ENCODE measurements at regions of chr5 and their contacts with region 1.

Region 1: DNA sequence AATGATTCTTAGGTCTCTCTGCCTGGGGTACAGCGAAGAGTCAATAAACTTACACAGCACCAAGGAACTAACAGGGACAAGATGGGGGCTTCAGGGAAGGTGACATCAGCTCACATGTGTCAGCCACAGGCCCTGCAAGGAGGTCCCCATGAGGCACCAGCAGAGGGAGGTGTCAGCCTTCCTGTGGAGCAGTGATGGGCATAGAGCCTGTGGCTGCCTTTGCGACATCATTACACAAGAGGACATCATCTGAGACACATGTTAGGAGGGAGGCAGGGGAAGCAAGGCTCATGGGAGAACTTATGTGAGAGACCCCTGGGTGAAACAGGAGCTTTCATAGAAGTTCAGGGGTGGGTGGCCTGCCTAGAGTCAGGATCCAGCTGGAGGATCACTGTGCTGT is 389.6 kb downstream of the SEMA5A start:
- DNase-seq: peak; percentile 72
- H3K4me3 Mint-ChIP-seq: no peak overlapping the region
- H3K27ac Mint-ChIP-seq: peak overlapping the region; percentile 29
- H3K4me1 Mint-ChIP-seq: peaks cover 6% of the 10 kb centered on the region
- H3K27me3 Mint-ChIP-seq: no peaks in the 10 kb centered on the region
- CTCF ChIP-seq: peak; percentile 49

Region 2: DNA sequence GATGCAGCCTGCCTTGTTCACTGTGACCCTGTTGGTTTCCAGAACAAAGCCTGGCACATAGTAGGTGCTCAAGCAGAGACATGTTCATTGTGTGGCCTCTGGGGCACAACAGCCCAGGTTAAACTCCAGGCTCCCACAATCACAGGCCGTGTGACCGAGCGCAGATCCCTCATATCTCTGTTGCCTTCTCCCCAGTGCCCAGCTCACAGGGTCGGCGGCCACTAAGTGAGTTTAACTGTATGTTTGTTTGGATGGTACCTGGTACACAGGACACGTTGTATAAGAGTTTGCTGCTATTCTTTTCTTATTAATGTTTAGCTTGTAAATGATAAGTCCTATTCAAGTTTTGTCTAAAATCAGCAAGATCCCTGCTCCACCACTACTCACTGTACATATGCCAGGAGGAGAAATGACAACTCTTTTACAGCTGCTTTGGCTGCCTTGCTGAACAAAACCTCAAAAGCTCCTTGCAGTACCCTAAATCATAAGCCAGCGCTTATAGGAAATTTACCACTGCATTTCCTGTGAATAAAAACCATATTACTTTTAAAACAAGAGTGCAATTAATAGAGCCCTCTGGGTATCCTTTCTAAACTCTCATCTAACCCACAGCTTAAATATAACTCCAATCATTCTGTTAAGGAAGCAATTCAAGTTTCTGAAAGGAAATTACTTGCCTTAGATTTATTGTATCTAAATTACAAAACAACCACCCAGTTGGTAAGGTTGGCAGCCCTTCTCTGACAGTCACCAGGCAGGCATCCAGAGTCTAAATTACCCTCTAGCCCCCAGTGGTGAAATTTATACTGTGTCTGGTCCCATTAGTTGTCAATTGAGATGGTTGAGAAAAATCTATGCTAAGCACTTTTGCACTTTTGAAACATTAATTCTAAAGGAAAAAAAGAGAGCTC is 10.2 kb after region 1 on chr5:
- CTCF ChIA-PET with region 1: interaction called, 21 read pairs
- POLR2A ChIA-PET with region 1: interaction called, 4 read pairs
- intact Hi-C with region 1: no loop called
- DNase-seq: peak; percentile 9
- H3K4me3 Mint-ChIP-seq: no peak overlapping the region
- H3K27ac Mint-ChIP-seq: no peak overlapping the region
- H3K4me1 Mint-ChIP-seq: peaks cover 25% of the 10 kb centered on the region
- H3K27me3 Mint-ChIP-seq: no peaks in the 10 kb centered on the region
- CTCF ChIP-seq: no peak

Region 3: GRCh38 chr5:9361835-9362234 is 205.6 kb after region 1 on chr5:
- CTCF ChIA-PET with region 1: no interaction called
- POLR2A ChIA-PET with region 1: no interaction called
- intact Hi-C with region 1: loop called (anchors 10 kb)
- DNase-seq: peak; percentile 85
- H3K4me3 Mint-ChIP-seq: no peak overlapping the region
- H3K27ac Mint-ChIP-seq: no peak overlapping the region
- H3K4me1 Mint-ChIP-seq: no peaks in the 10 kb centered on the region
- H3K27me3 Mint-ChIP-seq: no peaks in the 10 kb centered on the region
- CTCF ChIP-seq: peak; percentile 84

Region 4: GRCh38 chr5:9498541-9499497 is 342.5 kb after region 1 on chr5:
- CTCF ChIA-PET with region 1: interaction called, 6 read pairs
- POLR2A ChIA-PET with region 1: no interaction called
- intact Hi-C with region 1: loop called (anchors 5 kb)
- DNase-seq: peak; percentile 84
- H3K4me3 Mint-ChIP-seq: no peak overlapping the region
- H3K27ac Mint-ChIP-seq: no peak overlapping the region
- H3K4me1 Mint-ChIP-seq: no peaks in the 10 kb centered on the region
- H3K27me3 Mint-ChIP-seq: no peaks in the 10 kb centered on the region
- CTCF ChIP-seq: peak; percentile 46

Region 5: GRCh38 chr5:9544502-9545135 is 388.3 kb after region 1 on chr5:
- CTCF ChIA-PET with region 1: interaction called, 9 read pairs
- POLR2A ChIA-PET with region 1: no interaction called
- intact Hi-C with region 1: loop called (anchors 2 kb)
- DNase-seq: peak; percentile 76
- H3K4me3 Mint-ChIP-seq: peak overlapping the region; percentile 69
- H3K27ac Mint-ChIP-seq: peak overlapping the region; percentile 27
- H3K4me1 Mint-ChIP-seq: peaks cover 7% of the 10 kb centered on the region
- H3K27me3 Mint-ChIP-seq: no peaks in the 10 kb centered on the region
- CTCF ChIP-seq: peak; percentile 93

Region 6: GRCh38 chr5:10030210-10030831 is 874.0 kb after region 1 on chr5:
- CTCF ChIA-PET with region 1: no interaction called
- POLR2A ChIA-PET with region 1: no interaction called
- intact Hi-C with region 1: loop called (anchors 5 kb)
- DNase-seq: peak; percentile 71
- H3K4me3 Mint-ChIP-seq: no peak overlapping the region
- H3K27ac Mint-ChIP-seq: no peak overlapping the region
- H3K4me1 Mint-ChIP-seq: no peaks in the 10 kb centered on the region
- H3K27me3 Mint-ChIP-seq: no peaks in the 10 kb centered on the region
- CTCF ChIP-seq: peak; percentile 35

Region 7: DNA sequence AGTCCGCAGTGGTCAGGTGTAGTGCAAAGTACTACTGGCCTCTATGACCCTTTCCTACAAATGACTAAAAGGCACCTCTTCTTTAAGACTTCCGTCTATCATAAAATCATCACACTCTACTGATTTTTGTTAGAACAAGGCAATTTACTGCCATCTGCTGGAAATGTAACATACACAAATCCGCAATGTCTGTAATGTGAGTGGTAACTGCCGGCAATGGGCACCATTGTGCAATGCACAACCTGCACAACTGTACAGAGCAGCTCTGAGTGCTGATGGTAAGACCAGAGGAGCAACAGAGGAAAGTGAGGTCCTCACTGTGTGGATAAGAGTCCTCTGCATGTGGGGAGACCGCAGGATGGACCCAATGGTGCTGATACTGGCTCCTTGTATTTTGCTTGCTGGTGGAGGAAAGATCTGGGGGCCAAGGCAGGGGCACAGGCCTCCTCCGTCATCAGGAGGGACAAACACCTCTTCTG is 989.7 kb after region 1 on chr5:
- CTCF ChIA-PET with region 1: interaction called, 3 read pairs
- POLR2A ChIA-PET with region 1: no interaction called
- intact Hi-C with region 1: loop called (anchors 10 kb)
- DNase-seq: peak; percentile 70
- H3K4me3 Mint-ChIP-seq: no peak overlapping the region
- H3K27ac Mint-ChIP-seq: no peak overlapping the region
- H3K4me1 Mint-ChIP-seq: no peaks in the 10 kb centered on the region
- H3K27me3 Mint-ChIP-seq: no peaks in the 10 kb centered on the region
- CTCF ChIP-seq: peak; percentile 40

Measured in MCF 10A (cell line).